Caco-2 (cell line): ENCODE measurements at regions of chr12 and their contacts with region 1.

Region 1: GRCh38 chr12:26937875-26938700 is at the starts of genes FGFR1OP2 and INTS13:
- DNase-seq: peak; percentile 100
- H3K4me3 ChIP-seq: peak within 1 kb of the TSS; percentile 96
- H3K4me3 Mint-ChIP-seq: peak within 1 kb of the TSS; percentile 95
- H3K27ac Mint-ChIP-seq: peak within 1 kb of the TSS; percentile 91
- H3K4me1 ChIP-seq: peaks cover 22% of the 10 kb centered on the region
- H3K4me1 Mint-ChIP-seq: peaks cover 30% of the 10 kb centered on the region
- H3K27me3 ChIP-seq: no peaks in the 10 kb centered on the region
- H3K27me3 Mint-ChIP-seq: no peaks in the 10 kb centered on the region
- CTCF ChIP-seq: no peak
- total RNA-seq, gene FGFR1OP2: 77.9 and 86.9 TPM in 2 replicates
- total RNA-seq, gene INTS13: 40.1 and 41.5 TPM in 2 replicates

Region 2: DNA sequence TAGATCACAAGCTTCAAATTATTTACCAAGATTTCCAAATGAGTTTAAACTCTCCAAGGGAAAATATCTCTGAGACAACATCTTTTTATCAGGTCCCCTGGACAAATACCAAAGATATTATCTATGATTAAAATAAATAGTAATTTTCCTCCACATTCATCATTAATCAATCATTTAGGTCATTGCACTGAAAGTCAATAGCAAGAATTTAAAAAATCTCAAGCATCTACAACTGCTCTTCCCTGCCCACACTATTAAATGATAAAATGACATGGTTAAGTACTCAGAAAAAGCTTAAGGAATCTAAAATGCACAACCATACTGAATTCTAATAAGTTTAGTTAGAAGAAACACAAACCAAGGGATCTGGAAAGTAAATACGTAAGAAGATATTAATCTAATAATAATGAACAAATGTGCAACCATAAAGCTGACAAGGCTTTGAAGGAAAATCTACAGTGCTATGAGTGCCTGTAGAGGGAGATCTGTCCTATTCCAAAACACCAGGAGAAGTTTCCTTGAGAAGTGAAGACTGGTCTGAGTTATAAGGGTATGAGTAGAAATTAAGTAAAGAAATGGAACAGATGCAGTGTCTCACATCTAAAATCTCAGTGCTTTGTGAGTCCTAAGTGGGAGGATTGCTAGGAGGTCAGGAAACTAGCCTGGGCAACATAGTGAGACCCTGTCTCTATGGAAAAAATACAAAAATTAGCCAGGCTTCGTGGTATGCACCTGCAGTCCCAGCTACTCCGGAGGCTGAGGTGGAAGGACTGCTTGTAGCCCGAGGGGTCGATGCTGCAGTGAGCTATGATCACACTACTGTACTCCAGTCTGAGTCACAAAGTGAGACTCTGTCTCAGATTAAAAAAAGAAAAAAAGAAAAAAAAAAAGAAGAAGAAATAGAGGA is 19.5 kb before region 1 on chr12:
- CTCF ChIA-PET with region 1: no interaction called
- POLR2A ChIA-PET with region 1: no interaction called
- intact Hi-C with region 1: loop called (anchors 1 kb)
- DNase-seq: peak; percentile 41 to 58
- H3K4me3 ChIP-seq: no peak overlapping the region
- H3K4me3 Mint-ChIP-seq: peak overlapping the region; percentile 3
- H3K27ac Mint-ChIP-seq: peak overlapping the region; percentile 70
- H3K4me1 ChIP-seq: peaks cover 20% of the 10 kb centered on the region
- H3K4me1 Mint-ChIP-seq: peaks cover 19% of the 10 kb centered on the region
- H3K27me3 ChIP-seq: no peaks in the 10 kb centered on the region
- H3K27me3 Mint-ChIP-seq: no peaks in the 10 kb centered on the region
- CTCF ChIP-seq: peak in 1 of 2 experiments; percentile 68